Activated T-helper 1 cell treated with anti-CD3 and anti-CD28 coated beads, Interleukin-12 subunit alpha, Interleukin-12 subunit beta, Interleukin-2, Interleukin-4 antibody, amounts not matched to agents 30 ng/mL and 10 ng/mL and 1 ng/mL, durations not matched to agents 14 hours and 24 hours and 36 hours (primary cell): ENCODE measurements at regions of chr13 and their contacts with region 1.

Region 1: DNA sequence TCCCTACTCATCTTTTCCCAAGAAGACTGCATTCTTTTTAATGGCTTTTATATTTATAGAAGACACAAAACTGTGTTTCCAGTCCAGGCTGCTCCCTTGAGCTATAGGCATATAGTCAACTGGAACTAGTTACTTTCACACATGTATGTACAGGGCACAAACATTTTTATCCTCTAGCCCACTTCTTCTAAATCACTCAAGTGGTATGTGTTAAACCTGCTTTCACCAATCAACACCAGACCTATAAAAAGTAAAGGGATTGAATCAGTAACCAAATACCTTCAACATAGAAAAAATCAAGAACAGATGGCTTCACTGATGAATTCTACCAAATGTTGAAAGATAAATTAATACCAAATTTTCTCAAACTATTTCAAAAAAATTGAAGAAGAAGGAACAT is 584.2 kb upstream of the SLITRK1 start:
- DNase-seq: no peak
- H3K4me3 Mint-ChIP-seq: no peak overlapping the region
- H3K27ac Mint-ChIP-seq: no peak overlapping the region
- H3K4me1 Mint-ChIP-seq: no peaks in the 10 kb centered on the region
- H3K27me3 Mint-ChIP-seq: no peaks in the 10 kb centered on the region

Region 2: GRCh38 chr13:84528408-84529070 is 62.1 kb after region 1 on chr13:
- intact Hi-C with region 1: loop called (anchors 10 kb)
- DNase-seq: no peak
- H3K4me3 Mint-ChIP-seq: no peak overlapping the region
- H3K27ac Mint-ChIP-seq: no peak overlapping the region
- H3K4me1 Mint-ChIP-seq: no peaks in the 10 kb centered on the region
- H3K27me3 Mint-ChIP-seq: no peaks in the 10 kb centered on the region